Activated T-helper 2 cell treated with anti-CD3 and anti-CD28 coated beads, Interferon-gamma antibody, Interleukin-2, Interleukin-4, amounts not matched to agents 10 μg/mL and 5 μg/mL and 100 μg/mL, durations not matched to agents 14 hours and 24 hours and 36 hours (primary cell): ENCODE measurements at regions of chr19 and their contacts with region 1.

Region 1: GRCh38 chr19:11798391-11799330 is at the start of gene ZNF491:
- DNase-seq: peak; percentile 80
- H3K4me3 Mint-ChIP-seq: peak within 1 kb of the TSS; percentile 85
- H3K27ac Mint-ChIP-seq: peak within 1 kb of the TSS; percentile 62
- H3K4me1 Mint-ChIP-seq: peaks cover 9% of the 10 kb centered on the region
- H3K27me3 Mint-ChIP-seq: peaks cover 4% of the 10 kb centered on the region
- total RNA-seq, gene ZNF491: 0.67 and 0.82 TPM in 2 replicates

Region 2: DNA sequence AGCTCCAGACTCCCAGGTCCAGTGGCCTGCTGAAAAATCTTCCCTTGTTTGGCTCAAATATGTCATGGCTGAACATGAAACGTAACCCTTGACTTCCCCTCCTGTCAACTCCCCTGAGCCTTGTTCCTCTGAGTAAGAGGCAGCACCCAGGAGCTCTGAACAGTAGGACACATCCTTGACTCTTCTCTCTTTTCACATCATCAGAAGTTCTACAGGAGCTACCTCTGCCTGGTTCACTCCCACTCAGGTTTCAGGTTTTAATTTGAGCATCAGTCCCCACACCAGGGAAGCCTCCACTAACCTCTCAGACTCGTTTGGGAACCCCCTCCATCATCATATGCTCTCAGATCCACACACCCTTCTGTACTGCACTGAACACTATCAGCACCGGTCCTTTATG is 90.2 kb before region 1 on chr19:
- intact Hi-C with region 1: no loop called
- DNase-seq: no peak
- H3K4me3 Mint-ChIP-seq: no peak overlapping the region
- H3K27ac Mint-ChIP-seq: no peak overlapping the region
- H3K4me1 Mint-ChIP-seq: no peaks in the 10 kb centered on the region
- H3K27me3 Mint-ChIP-seq: no peaks in the 10 kb centered on the region

Region 3: GRCh38 chr19:11766597-11767591 is 31.8 kb before region 1 on chr19 and contains the start of gene ZNF441:
- intact Hi-C with region 1: loop called (anchors 2 kb)
- DNase-seq: peak; percentile 89
- H3K4me3 Mint-ChIP-seq: peak within 1 kb of the TSS; percentile 96
- H3K27ac Mint-ChIP-seq: peak within 1 kb of the TSS; percentile 93
- H3K4me1 Mint-ChIP-seq: peaks cover 11% of the 10 kb centered on the region
- H3K27me3 Mint-ChIP-seq: peaks cover 3% of the 10 kb centered on the region
- total RNA-seq, gene ZNF441: 4.2 and 4.9 TPM in 2 replicates

Region 4: DNA sequence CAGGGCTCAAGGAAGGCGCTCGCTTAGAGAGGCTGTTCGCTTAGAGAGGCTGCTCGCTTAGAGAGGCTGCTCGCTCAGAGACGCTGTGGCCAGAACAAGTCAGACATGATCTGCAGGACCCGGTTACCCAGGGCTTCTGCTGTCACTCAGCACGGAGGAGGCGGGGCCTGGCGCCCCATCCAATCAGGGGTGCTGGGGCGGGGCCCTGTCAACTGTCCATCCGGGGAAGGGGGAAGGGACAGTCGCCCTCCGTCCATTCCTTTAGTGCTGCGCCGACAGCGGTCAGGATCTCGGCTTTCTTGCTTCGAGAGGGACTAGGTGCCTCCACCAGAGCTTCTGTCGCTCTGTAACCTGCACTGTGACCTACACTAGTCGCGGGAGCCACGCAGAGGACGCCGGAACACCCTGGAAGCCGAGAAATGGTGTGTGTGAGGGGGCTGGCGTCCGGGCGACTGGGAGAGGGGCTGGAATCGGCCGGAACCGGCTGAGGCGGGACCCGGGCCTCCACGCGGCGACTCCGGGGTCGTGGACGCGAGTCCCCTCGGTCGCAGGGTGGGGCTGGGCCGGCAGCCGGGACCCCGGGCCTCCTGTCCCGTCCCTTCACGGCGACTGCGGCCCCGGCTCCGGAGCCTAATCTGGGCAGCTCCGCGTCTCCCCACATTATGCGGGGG is 15.5 kb after region 1 on chr19 and contains the start of gene ZNF440:
- intact Hi-C with region 1: loop called (anchors 1 kb)
- DNase-seq: peak; percentile 85
- H3K4me3 Mint-ChIP-seq: peak within 1 kb of the TSS; percentile 88
- H3K27ac Mint-ChIP-seq: peak within 1 kb of the TSS; percentile 71
- H3K4me1 Mint-ChIP-seq: peaks cover 14% of the 10 kb centered on the region
- H3K27me3 Mint-ChIP-seq: no peaks in the 10 kb centered on the region
- total RNA-seq, gene ZNF440: 10.8 and 11.0 TPM in 2 replicates

Region 5: GRCh38 chr19:11848594-11849469 is 50.2 kb after region 1 on chr19 and contains the start of gene ZNF439:
- intact Hi-C with region 1: loop called (anchors 1 kb)
- DNase-seq: peak; percentile 83
- H3K4me3 Mint-ChIP-seq: peak within 1 kb of the TSS; percentile 70
- H3K27ac Mint-ChIP-seq: peak within 1 kb of the TSS; percentile 59
- H3K4me1 Mint-ChIP-seq: peaks cover 7% of the 10 kb centered on the region
- H3K27me3 Mint-ChIP-seq: no peaks in the 10 kb centered on the region
- total RNA-seq, gene ZNF439: 4.3 and 5.1 TPM in 2 replicates

Region 6: DNA sequence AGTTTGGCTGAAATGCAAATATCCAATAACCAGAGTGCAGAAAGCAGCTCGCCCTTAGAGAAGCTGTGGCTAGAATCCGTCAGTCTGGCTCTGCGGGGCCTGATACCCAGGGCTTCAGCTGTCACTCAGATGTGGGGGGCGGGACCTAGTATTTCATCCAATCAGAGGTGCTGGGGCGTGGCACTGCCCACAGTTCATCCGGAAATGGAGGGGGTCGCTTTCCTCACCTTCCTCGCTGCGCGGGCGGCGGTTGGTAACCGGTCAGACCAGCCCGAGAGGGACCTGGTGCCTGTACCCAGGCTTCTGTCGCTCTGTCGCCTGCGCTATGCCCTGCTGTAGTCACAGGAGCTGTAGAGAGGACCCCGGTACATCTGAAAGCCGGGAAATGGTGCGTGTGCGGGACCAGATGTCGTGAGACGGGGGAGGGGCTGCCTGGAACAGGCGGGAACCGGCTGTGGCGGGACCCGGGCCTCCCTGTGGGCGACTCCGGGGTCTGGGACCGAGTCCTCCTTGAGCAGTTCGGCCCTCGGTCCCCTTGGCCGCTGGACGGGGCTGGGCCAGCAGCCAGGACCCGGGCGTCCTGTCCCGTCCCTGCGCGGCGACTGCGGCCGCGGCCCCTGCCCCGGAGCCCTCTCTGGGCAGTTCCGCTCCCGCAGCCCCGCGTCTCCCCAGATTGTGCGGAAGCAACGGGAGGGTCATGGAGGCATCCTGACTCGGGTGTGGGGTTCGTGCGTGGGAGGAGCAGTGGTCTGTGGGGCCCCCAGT is 126.4 kb after region 1 on chr19 and contains the start of gene ZNF700:
- intact Hi-C with region 1: loop called (anchors 1 kb)
- DNase-seq: peak; percentile 91
- H3K4me3 Mint-ChIP-seq: peak within 1 kb of the TSS; percentile 95
- H3K27ac Mint-ChIP-seq: peak within 1 kb of the TSS; percentile 98
- H3K4me1 Mint-ChIP-seq: peaks cover 23% of the 10 kb centered on the region
- H3K27me3 Mint-ChIP-seq: peaks cover 2% of the 10 kb centered on the region
- total RNA-seq, gene ZNF700: 14.5 and 14.6 TPM in 2 replicates